Dorsolateral prefrontal cortex (tissue), 120 donors: ENCODE measurements at regions of chr21 and their contacts with region 1.

Region 1: GRCh38 chr21:17512253-17513213 is at the start of gene CXADR:
- DNase-seq: peak; percentile 59 to 91 (median 74)
- H3K4me3 ChIP-seq: peak within 1 kb of the TSS; percentile 72 to 97 (median 84)
- H3K27ac ChIP-seq: peak within 1 kb of the TSS; percentile 73 to 96 (median 91)
- H3K27me3 ChIP-seq: no peaks in the 10 kb centered on the region
- CTCF ChIP-seq: peak in 55 of 56 donors; percentile 30 to 78 (median 62)
- total RNA-seq, gene CXADR: 5.7 to 28.6 (median 17.8) TPM

Region 2: DNA sequence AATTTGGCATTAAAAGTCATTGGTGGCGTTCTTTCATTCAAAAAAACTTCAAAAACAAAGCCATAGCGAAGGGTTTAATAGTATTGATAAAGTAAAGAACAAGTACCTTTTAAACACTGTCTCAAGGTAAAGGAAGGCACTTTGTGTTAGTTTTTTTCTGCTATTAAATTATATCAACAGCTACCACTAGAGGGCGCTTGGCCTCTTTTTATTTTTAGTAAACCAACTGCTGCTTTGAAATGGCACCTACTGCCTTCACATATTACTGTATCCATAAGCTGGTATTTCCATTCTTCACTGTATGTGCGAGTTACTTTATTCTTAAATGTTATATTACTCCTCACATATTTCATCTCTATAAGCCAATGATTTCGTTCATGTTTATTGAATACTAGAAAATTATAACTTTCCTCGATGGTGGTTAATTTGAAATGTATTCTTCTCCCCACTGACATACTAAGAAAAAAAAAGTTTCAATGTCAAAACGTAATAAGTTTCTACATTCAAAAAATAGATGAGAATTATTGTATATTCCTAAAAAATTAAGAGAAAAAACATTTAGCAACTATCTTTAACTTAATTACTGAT is 125.4 kb before region 1 on chr21:
- intact Hi-C with region 1: loop called (anchors 5 to 10 kb)
- DNase-seq: peak in 2 of 10 donors; percentile 28 to 35
- H3K4me3 ChIP-seq: no peak overlapping the region
- H3K27ac ChIP-seq: peak overlapping the region in 2 of 59 donors; percentile 5 to 18
- H3K27me3 ChIP-seq: no peaks in the 10 kb centered on the region
- CTCF ChIP-seq: peak; percentile 81 to 100 (median 90)

Region 3: DNA sequence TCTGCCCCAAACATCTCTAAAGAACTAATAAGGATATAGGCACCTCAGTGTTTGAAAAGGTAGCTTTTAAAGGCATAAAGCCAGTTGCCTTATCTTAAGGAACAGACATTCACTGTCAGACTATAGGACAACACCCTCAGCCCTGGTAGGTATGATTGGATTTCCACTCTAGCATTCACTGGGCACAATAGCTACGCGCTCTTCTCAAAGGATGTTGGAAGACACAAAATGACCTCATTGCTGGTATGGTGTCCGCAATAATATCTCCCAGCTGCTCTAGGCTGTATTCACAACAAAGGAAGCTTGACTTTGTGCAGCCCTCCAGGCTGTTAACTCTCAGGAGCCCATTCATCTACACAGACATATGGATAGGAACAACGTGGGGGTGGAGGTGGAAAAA is 119.1 kb before region 1 on chr21:
- intact Hi-C with region 1: loop called (anchors 5 to 10 kb)
- DNase-seq: no peak
- H3K4me3 ChIP-seq: peak overlapping the region in 1 of 59 donors; percentile 22
- H3K27ac ChIP-seq: peak overlapping the region in 1 of 59 donors; percentile 9
- H3K27me3 ChIP-seq: no peaks in the 10 kb centered on the region
- CTCF ChIP-seq: no peak

Region 4: DNA sequence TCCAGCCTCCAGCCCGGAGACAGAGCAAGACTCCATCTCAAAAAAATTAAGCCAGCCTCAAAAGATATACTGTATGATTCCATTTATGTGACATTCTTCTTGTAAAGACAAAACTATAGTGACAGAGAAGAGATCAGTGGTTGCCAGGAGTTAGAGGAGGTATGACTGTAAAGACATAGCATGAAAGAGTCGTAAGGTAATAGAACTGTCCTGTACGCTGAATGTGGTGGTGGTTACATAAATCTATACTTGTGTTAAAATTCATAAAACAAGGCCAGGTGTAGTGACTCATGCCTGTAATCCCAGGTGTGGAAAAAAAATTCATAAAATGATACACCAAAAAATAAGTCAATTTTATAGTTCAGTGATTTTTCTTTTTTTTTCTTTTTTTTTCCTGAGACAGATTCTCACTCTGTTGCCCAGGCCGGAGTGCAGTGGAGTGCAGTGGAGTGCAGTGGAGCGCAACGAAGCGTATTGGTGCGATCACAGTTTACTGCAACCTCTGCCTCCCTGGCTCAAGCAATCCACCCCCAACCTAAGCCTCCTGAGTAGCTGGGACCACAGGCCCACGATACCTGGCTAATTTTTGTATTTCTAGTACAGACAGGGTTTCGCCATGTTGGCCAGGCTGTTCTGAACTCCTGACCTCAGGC is 84.6 kb before region 1 on chr21:
- intact Hi-C with region 1: loop called in 1 of 2 experiments (anchors 5 kb)
- DNase-seq: no peak
- H3K4me3 ChIP-seq: peak overlapping the region in 2 of 59 donors; percentile 21 to 22
- H3K27ac ChIP-seq: peak overlapping the region; percentile 49 to 98 (median 90)
- H3K27me3 ChIP-seq: no peaks in the 10 kb centered on the region
- CTCF ChIP-seq: no peak

Region 5: DNA sequence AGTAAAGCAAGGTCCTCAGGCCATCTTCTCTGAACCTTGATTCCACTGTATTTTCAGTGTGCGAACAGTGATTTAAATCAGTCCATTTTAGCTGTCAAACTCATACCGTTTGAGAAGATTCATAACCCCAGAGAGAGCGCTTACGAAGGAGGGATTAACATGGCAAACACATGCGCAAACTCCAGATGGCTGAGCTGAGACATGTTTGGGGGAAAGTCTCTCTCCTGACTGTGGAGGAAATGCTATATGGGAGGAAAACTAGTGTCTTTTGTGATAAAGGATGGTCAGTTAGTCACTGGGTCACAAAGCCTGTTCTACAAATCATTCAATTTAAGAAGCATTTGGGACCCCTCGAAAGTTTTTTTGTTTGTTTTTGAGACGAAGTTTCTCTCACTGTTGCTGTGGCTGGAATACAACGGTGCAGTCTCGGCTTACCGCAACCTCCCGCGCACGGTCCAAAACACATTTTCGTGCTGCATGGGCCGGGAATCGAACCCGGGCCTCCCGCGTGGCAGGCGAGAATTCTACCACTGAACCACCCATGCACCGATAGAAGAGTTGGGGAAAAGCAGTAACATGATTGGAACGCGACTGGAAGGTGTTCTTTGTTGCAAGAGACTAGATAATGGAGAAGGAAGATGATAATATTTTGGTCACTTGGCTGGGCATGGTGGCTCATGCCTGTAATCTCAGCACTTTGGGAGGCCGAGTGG is 58.1 kb before region 1 on chr21:
- intact Hi-C with region 1: loop called in 1 of 2 experiments (anchors 10 kb)
- DNase-seq: peak in 9 of 10 donors; percentile 12 to 84 (median 72)
- H3K4me3 ChIP-seq: peak overlapping the region in 24 of 59 donors; percentile 0 to 47 (median 24)
- H3K27ac ChIP-seq: peak overlapping the region in 48 of 59 donors; percentile 2 to 82 (median 62)
- H3K27me3 ChIP-seq: no peaks in the 10 kb centered on the region
- CTCF ChIP-seq: no peak

Region 6: DNA sequence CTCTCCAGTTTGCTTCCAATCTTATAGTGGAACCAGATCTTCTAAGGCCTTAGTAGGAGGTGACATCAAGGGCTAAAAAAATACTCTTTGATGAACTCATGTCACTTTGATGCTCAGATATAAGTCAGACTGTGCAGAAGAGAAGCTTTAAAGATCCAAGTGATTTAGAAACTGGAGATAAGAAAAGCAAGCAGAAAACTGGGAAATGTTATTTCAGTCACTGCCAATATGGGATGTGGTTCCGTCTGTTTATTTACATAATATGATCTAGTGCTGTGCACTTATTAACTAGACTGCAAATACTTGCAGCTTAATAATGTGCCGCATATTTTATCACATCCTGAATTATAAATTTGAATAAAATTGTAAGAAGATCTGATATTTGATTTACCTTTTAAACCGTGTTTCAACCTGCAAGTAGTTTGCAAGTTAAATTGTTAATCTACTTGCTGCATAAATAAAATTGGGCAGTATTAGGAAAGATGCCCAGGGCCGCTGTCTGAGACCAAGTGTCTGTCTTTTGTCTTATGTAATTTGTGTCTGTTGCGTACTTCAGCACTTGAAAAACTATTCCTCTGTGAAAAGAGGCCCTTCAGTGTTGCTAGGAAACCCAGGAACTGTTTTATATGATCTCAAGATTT is 30.0 kb after region 1 on chr21:
- intact Hi-C with region 1: no loop called
- DNase-seq: no peak
- H3K4me3 ChIP-seq: peak overlapping the region in 28 of 59 donors; percentile 0 to 31 (median 14)
- H3K27ac ChIP-seq: peak overlapping the region in 58 of 59 donors; percentile 6 to 86 (median 73)
- H3K27me3 ChIP-seq: no peaks in the 10 kb centered on the region
- CTCF ChIP-seq: peak in 1 of 56 donors; percentile 13

Region 7: GRCh38 chr21:17554679-17555465 is 42.3 kb after region 1 on chr21:
- intact Hi-C with region 1: loop called in 1 of 2 experiments (anchors 5 kb)
- DNase-seq: no peak
- H3K4me3 ChIP-seq: peak overlapping the region in 14 of 59 donors; percentile 4 to 44 (median 22)
- H3K27ac ChIP-seq: peak overlapping the region in 48 of 59 donors; percentile 20 to 81 (median 63)
- H3K27me3 ChIP-seq: no peaks in the 10 kb centered on the region
- CTCF ChIP-seq: peak; percentile 13 to 85 (median 62)